HEK293 (cell line): ENCODE measurements at regions of chr22 and their contacts with region 1.

Region 1: GRCh38 chr22:39319270-39320022 is at the start of gene RPL3:
- H3K4me3 ChIP-seq: peak within 1 kb of the TSS; percentile 73
- H3K27ac ChIP-seq: peak within 1 kb of the TSS; percentile 99
- H3K4me1 ChIP-seq: 0 out of 2 replicates have a peak, but pooled peaks cover 4% of the 10 kb centered on the region
- CTCF ChIP-seq: peak; percentile 86

Region 2: DNA sequence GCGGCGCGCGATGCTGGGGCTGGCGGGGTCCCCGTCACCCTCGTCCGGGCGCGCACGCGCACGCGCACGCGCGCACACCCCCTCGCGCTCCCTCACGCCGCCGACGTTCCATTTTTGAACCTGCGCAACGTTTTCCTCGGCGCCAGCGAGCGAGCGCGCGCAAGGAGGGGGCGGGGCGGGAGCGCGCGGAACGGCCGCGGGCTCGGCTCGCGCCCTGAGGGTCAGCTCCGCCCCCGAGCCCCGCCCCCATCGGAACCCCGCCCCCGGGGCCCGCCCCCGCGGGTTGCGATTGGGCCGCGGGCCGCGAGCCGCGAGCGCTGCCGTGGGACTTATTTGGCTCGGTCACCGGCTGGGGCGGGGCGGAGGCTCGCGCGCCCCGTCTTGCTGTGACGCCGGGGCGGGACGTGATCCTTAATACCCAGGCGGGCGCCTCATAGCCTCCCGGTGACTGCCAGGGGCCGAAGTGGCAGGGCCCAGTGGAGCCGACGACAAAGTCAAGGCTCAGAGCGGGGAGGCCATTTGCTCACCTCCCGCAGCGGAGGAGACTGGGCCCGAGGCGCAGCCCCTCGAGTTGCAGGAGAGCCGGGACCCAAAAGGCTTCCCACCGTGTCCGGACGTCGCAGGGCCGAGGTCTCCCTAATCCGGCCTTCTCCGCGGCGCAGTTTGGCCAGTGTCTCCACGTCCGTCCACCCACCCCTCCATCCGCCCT is 166.8 kb before region 1 on chr22 and contains the start of gene CBX7:
- CTCF ChIA-PET with region 1: interaction called, 7 read pairs
- POLR2A ChIA-PET with region 1: interaction called, 27 read pairs
- H3K4me3 ChIP-seq: peak within 1 kb of the TSS; percentile 54
- H3K27ac ChIP-seq: peak within 1 kb of the TSS; percentile 64; the same call in 1 of the 2 replicates
- H3K4me1 ChIP-seq: peaks cover 2% of the 10 kb centered on the region; the same call in 1 of the 2 replicates
- CTCF ChIP-seq: no peak

Region 3: GRCh38 chr22:39253435-39254070 is 65.9 kb before region 1 on chr22:
- CTCF ChIA-PET with region 1: interaction called, 4 read pairs
- POLR2A ChIA-PET with region 1: interaction called, 26 read pairs
- H3K4me3 ChIP-seq: peak overlapping the region; percentile 14; the same call in 1 of the 2 replicates
- H3K27ac ChIP-seq: peak overlapping the region; percentile 12; the same call in 1 of the 2 replicates
- H3K4me1 ChIP-seq: peaks cover 11% of the 10 kb centered on the region
- CTCF ChIP-seq: no peak

Region 4: DNA sequence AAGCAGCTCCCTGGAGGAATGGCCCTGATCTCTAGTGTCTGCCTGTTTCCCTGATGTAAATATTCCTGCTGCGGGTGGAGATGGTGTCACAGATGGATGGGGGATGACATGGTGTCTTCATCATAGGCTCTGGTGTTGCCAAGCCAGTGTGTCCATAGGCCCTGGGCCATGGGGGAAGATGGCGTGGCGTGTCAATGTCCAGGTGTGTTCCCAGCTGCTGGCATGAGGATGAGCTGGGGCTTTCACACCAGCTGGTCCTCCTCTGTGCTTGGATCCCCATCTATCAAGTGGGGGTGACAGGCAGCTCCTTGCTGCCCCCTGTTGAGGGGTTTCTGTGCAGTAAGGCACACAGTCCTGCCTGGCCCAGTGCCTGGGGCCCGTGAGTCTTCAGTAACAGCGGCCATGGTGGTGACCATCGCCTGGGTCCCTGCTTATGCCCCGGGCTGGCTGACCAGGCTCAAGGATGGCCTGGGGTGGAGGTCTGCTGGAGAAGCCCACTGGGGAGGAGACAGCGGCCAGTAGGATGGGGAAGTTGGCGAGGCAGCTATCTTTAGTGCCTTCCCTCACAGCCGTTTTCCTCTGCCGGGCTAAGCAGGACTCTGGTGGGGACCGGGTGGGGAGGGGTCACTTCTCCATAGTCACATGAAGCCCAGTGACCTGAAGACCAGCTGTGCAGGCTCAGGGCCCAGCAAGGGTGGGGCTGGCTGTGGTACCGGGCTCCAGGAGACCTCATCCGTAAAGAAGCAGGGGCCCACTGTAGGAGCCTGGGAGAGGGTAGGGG is 12.7 kb before region 1 on chr22:
- CTCF ChIA-PET with region 1: interaction called, 15 read pairs
- POLR2A ChIA-PET with region 1: interaction called, 69 read pairs
- H3K4me3 ChIP-seq: no peak overlapping the region
- H3K27ac ChIP-seq: no peak overlapping the region
- H3K4me1 ChIP-seq: no peaks in the 10 kb centered on the region
- CTCF ChIP-seq: no peak

Region 5: GRCh38 chr22:39349506-39349966 is 30.1 kb after region 1 on chr22:
- CTCF ChIA-PET with region 1: interaction called, 3 read pairs
- POLR2A ChIA-PET with region 1: interaction called, 15 read pairs
- H3K4me3 ChIP-seq: peak overlapping the region; percentile 76
- H3K27ac ChIP-seq: peak overlapping the region; percentile 74; the same call in 1 of the 2 replicates
- H3K4me1 ChIP-seq: peaks cover 15% of the 10 kb centered on the region
- CTCF ChIP-seq: no peak

Region 6: DNA sequence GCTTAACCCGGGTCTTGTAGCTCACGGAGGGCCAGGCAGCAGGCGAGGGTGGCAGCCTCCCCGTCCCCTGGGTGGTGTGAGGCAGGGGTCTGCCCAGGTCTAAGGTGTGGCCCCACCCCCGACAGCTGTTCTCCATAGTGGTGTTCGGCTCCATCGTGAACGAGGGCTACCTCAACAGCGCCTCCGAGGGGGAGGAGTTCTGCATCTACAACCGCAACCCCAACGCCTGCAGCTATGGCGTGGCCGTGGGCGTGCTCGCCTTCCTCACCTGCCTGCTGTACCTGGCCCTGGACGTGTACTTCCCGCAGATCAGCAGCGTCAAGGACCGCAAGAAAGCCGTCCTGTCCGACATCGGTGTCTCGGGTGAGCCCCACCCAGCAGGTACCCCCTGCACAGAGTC is 54.7 kb after region 1 on chr22:
- CTCF ChIA-PET with region 1: no interaction called
- POLR2A ChIA-PET with region 1: no interaction called
- H3K4me3 ChIP-seq: no peak overlapping the region
- H3K27ac ChIP-seq: no peak overlapping the region
- H3K4me1 ChIP-seq: no peaks in the 10 kb centered on the region
- CTCF ChIP-seq: no peak

Region 7: GRCh38 chr22:39405346-39406085 is 86.1 kb after region 1 on chr22:
- CTCF ChIA-PET with region 1: no interaction called
- POLR2A ChIA-PET with region 1: interaction called, 35 read pairs
- H3K4me3 ChIP-seq: no peak overlapping the region
- H3K27ac ChIP-seq: no peak overlapping the region
- H3K4me1 ChIP-seq: no peaks in the 10 kb centered on the region
- CTCF ChIP-seq: no peak

Region 8: GRCh38 chr22:39532215-39533071 is 213.0 kb after region 1 on chr22 and contains the start of gene RPS19BP1:
- CTCF ChIA-PET with region 1: interaction called, 23 read pairs
- POLR2A ChIA-PET with region 1: interaction called, 62 read pairs
- H3K4me3 ChIP-seq: peak within 1 kb of the TSS; percentile 75
- H3K27ac ChIP-seq: peak within 1 kb of the TSS; percentile 79
- H3K4me1 ChIP-seq: peaks cover 14% of the 10 kb centered on the region
- CTCF ChIP-seq: peak; percentile 13; the same call in 1 of the 2 replicates